Lower leg skin (tissue), 4 donors: ENCODE measurements at regions of chr6 and their contacts with region 1.

Region 1: DNA sequence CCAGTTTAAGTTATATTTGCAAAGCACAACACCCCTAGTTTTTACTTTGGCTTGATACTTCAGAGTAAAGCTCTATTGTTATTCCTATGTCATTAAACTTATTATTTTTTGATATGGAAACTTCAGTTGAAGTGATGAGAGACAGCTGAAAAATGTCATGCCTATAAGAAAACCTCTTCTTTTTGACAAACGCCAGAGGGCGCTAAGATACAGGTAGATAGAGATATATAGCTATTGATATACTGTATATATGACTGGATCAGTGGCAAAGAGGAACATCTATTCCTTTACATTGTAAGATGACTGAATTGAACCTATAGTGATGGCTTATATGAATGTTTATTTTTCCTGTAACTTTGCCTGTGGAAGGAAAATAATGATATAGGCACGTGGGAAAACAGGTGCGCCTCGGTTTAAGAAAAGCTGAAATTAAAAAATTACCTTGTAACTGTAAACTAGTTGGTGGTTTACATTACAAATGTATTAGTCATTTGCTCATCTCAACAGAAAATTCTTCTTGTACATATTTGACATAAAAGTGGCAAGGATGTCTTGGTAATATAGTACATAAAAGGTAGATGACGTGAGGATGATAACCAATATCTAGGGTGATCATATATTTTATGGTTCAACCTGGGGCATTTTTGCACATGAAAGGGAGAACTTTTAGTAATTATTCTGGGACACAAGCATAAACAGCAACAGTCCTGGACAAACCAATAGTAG is 74.1 kb downstream of the LAMA4 start:
- DNase-seq: peak in 1 of 2 donors; percentile 34
- H3K4me3 ChIP-seq: no peak overlapping the region
- CTCF ChIP-seq: peak in 1 of 3 donors; percentile 50
- POLR2A ChIP-seq: no peak

Region 2: DNA sequence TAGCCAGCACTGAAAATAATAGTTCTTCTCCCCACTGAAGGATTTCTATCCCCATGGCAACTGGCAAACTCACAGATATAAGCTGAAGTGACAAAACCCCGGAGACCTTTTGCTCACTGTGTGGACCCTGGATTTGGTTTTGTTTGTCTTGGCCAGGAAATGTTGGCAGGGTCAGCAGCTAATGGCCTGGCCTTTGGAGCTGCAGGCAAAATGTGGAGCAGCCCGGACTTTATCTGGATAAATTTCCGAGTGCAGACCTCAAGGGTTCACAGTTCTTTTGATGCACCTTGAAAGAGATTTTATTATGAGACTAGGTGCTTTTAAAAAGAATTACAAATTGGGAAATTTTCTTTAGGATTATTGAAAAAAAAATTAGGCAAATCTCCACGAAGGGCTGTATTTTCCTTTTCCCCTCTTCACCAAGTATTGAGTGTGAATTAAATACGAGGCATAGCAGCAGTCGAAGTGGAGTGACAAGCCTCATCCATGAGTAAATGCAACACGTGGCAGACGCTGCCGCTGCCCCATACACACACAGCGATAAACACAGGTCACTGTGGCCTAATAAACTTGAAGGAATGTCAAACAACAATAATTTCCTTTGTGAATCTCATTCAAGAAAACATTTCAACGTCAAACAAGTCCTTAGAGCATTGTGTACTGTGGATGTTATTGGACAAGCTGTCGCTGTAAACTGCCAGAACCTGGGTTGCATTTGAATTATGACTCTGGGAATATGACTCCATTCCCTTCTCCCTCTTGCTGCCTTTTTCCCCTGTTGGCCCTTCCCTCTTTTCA is 161.4 kb before region 1 on chr6:
- intact Hi-C with region 1: no loop called
- DNase-seq: peak; percentile 69 to 92
- H3K4me3 ChIP-seq: no peak overlapping the region
- CTCF ChIP-seq: no peak
- POLR2A ChIP-seq: no peak

Region 3: GRCh38 chr6:112311950-112312547 is 131.8 kb after region 1 on chr6:
- intact Hi-C with region 1: loop called (anchors 5 kb)
- DNase-seq: no peak
- H3K4me3 ChIP-seq: no peak overlapping the region
- CTCF ChIP-seq: no peak
- POLR2A ChIP-seq: no peak